IMR-90 (cell line): ENCODE measurements at regions of chr17 and their contacts with region 1.

Region 1: GRCh38 chr17:49574323-49574781 is 1.3 kb upstream of the NXPH3 start:
- DNase-seq: no peak
- ATAC-seq: no peak
- H3K4me3 ChIP-seq: no peak overlapping the region
- H3K27ac ChIP-seq: no peak overlapping the region
- H3K4me1 ChIP-seq: peaks cover 4% of the 10 kb centered on the region; the same call in 1 of the 2 replicates
- H3K27me3 ChIP-seq: peaks cover 65% of the 10 kb centered on the region
- CTCF ChIP-seq: no peak
- POLR2A ChIP-seq: no peak
- RAD21 ChIP-seq: no peak

Region 2: GRCh38 chr17:47941236-47941994 is 1632.9 kb before region 1 on chr17 and contains the start of gene PNPO:
- CTCF ChIA-PET with region 1: no interaction called
- POLR2A ChIA-PET with region 1: no interaction called
- dilution Hi-C with region 1: no loop called
- in situ Hi-C with region 1: no loop called
- intact Hi-C with region 1: no loop called
- DNase-seq: peak; percentile 97
- ATAC-seq: peak; percentile 100
- H3K4me3 ChIP-seq: peak within 1 kb of the TSS; percentile 70
- H3K27ac ChIP-seq: peak within 1 kb of the TSS; percentile 39; the same call in 1 of the 2 replicates
- H3K4me1 ChIP-seq: peaks cover 2% of the 10 kb centered on the region; the same call in 1 of the 2 replicates
- H3K27me3 ChIP-seq: no peaks in the 10 kb centered on the region
- CTCF ChIP-seq: no peak
- POLR2A ChIP-seq: no peak
- RAD21 ChIP-seq: no peak
- total RNA-seq, gene PNPO: 32.5 and 34.1 TPM in 2 replicates

Region 3: GRCh38 chr17:49180303-49180702 is 394.0 kb before region 1 on chr17:
- CTCF ChIA-PET with region 1: no interaction called
- POLR2A ChIA-PET with region 1: no interaction called
- dilution Hi-C with region 1: no loop called
- in situ Hi-C with region 1: no loop called
- intact Hi-C with region 1: no loop called
- DNase-seq: peak; percentile 36
- ATAC-seq: peak; percentile 85
- H3K4me3 ChIP-seq: no peak overlapping the region
- H3K27ac ChIP-seq: no peak overlapping the region
- H3K4me1 ChIP-seq: no peaks in the 10 kb centered on the region
- H3K27me3 ChIP-seq: peaks cover 2% of the 10 kb centered on the region
- CTCF ChIP-seq: peak; percentile 81
- POLR2A ChIP-seq: no peak
- RAD21 ChIP-seq: peak; percentile 75

Region 4: GRCh38 chr17:49249292-49249794 is 325.0 kb before region 1 on chr17:
- CTCF ChIA-PET with region 1: no interaction called
- POLR2A ChIA-PET with region 1: no interaction called
- dilution Hi-C with region 1: no loop called
- in situ Hi-C with region 1: no loop called
- intact Hi-C with region 1: no loop called
- DNase-seq: no peak
- ATAC-seq: peak; percentile 48
- H3K4me3 ChIP-seq: no peak overlapping the region
- H3K27ac ChIP-seq: no peak overlapping the region
- H3K4me1 ChIP-seq: no peaks in the 10 kb centered on the region
- H3K27me3 ChIP-seq: peaks cover 17% of the 10 kb centered on the region
- CTCF ChIP-seq: no peak
- POLR2A ChIP-seq: no peak
- RAD21 ChIP-seq: no peak

Region 5: DNA sequence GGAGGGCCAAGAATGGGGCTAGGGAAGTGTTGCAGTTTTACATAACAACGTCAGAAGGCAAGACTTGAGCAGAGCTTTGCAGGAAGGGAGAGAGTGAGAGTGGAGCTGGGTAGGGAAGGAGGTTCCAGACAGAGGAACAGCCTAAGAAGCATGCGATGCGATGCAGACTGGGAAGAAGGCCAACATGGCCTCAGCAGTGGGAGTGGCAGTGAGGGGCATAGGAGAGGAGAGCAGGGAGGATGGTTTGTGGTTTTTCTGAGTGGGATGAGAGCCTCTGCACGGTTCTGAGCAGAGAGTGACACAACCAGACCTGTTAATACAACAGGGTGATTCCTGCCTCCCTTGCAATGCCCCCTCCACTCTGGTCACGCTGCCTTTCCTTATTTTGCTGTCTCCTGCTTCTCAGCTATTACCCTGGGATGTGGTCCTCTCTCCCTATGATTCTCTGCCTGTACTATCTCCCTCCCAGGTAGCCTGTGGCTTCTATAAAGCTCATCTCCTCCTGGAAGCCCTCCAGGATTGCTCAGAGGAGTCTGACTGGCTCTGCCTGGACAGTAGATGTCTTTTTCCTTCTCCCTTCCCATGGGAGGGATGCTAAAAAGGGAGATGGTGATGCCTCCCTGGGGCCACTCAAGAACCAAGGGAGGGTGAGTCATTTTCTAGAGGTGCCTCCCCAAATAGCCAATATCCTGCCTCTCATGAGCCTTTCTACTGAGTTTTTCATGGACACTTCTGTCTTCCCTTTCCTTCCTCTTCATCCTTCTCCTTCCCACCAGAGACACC is 118.0 kb before region 1 on chr17:
- CTCF ChIA-PET with region 1: no interaction called
- POLR2A ChIA-PET with region 1: no interaction called
- dilution Hi-C with region 1: no loop called
- in situ Hi-C with region 1: no loop called
- intact Hi-C with region 1: no loop called
- DNase-seq: peak; percentile 89
- ATAC-seq: peak; percentile 98
- H3K4me3 ChIP-seq: no peak overlapping the region
- H3K27ac ChIP-seq: no peak overlapping the region
- H3K4me1 ChIP-seq: peaks cover 6% of the 10 kb centered on the region
- H3K27me3 ChIP-seq: peaks cover 41% of the 10 kb centered on the region
- CTCF ChIP-seq: no peak
- POLR2A ChIP-seq: no peak
- RAD21 ChIP-seq: no peak

Region 6: GRCh38 chr17:49667854-49668253 is 93.5 kb after region 1 on chr17:
- CTCF ChIA-PET with region 1: no interaction called
- POLR2A ChIA-PET with region 1: interaction called, 17 read pairs
- dilution Hi-C with region 1: no loop called
- in situ Hi-C with region 1: no loop called
- intact Hi-C with region 1: no loop called
- DNase-seq: no peak
- ATAC-seq: no peak
- H3K4me3 ChIP-seq: no peak overlapping the region
- H3K27ac ChIP-seq: no peak overlapping the region
- H3K4me1 ChIP-seq: no peaks in the 10 kb centered on the region
- H3K27me3 ChIP-seq: no peaks in the 10 kb centered on the region
- CTCF ChIP-seq: no peak
- POLR2A ChIP-seq: no peak
- RAD21 ChIP-seq: no peak

Region 7: GRCh38 chr17:49677933-49678847 is 103.8 kb after region 1 on chr17 and contains the start of gene SPOP:
- CTCF ChIA-PET with region 1: interaction called, 4 read pairs
- POLR2A ChIA-PET with region 1: no interaction called
- dilution Hi-C with region 1: no loop called
- in situ Hi-C with region 1: no loop called
- intact Hi-C with region 1: loop called (anchors 5 kb)
- DNase-seq: peak; percentile 100
- ATAC-seq: peak; percentile 99
- H3K4me3 ChIP-seq: peak within 1 kb of the TSS; percentile 69
- H3K27ac ChIP-seq: peak within 1 kb of the TSS; percentile 86
- H3K4me1 ChIP-seq: peaks cover 4% of the 10 kb centered on the region; the same call in 1 of the 2 replicates
- H3K27me3 ChIP-seq: peaks cover 7% of the 10 kb centered on the region
- CTCF ChIP-seq: no peak
- POLR2A ChIP-seq: peak; percentile 32; the same call in 1 of the 2 replicates
- RAD21 ChIP-seq: no peak
- total RNA-seq, gene SPOP: 47.5 and 56.9 TPM in 2 replicates

Region 8: DNA sequence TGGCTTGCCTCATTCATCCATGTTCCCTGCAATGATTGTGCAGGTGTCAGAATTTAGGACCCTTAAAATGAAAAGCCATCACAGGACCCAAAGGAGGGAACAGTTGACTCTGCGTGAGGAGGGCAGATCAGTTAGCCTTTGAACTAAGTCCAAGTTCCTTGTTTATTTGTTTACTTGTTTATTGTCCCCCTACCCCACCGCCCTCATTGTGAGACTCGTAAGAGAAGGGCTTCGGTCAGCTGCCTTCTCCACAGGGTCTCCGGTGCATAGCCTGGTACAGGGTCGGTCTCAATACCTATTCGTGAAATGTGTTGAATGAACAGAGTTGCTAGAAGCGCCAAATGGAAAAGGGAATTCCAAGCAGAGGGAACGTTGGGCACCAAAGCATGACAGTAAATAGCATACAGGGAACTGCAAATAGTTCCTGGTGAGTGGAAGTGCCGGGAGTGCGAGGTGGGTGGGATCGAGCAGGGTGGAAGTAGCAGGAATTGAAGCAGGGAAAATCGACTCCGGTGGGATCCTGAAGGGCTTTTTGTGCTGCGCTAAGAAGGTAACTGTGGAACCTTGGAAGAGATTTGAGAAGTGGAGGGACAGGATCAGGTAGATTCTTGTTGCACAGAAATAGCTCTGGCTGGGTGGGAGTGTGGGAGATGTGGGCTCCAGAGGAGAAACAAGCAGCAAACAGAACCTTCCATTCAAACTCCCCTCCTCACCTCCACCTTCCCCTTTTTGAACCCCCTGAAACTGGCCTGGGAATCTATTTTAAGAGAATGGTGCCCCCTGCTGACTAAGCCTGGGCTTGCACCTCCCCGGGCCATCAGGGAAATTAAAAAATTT is 120.7 kb after region 1 on chr17:
- CTCF ChIA-PET with region 1: interaction called, 16 read pairs
- POLR2A ChIA-PET with region 1: no interaction called
- dilution Hi-C with region 1: no loop called
- in situ Hi-C with region 1: loop called (anchors 5 kb)
- intact Hi-C with region 1: no loop called
- DNase-seq: no peak
- ATAC-seq: peak; percentile 79
- H3K4me3 ChIP-seq: no peak overlapping the region
- H3K27ac ChIP-seq: no peak overlapping the region
- H3K4me1 ChIP-seq: no peaks in the 10 kb centered on the region
- H3K27me3 ChIP-seq: peaks cover 4% of the 10 kb centered on the region
- CTCF ChIP-seq: peak; percentile 95
- POLR2A ChIP-seq: no peak
- RAD21 ChIP-seq: peak; percentile 93

Region 9: DNA sequence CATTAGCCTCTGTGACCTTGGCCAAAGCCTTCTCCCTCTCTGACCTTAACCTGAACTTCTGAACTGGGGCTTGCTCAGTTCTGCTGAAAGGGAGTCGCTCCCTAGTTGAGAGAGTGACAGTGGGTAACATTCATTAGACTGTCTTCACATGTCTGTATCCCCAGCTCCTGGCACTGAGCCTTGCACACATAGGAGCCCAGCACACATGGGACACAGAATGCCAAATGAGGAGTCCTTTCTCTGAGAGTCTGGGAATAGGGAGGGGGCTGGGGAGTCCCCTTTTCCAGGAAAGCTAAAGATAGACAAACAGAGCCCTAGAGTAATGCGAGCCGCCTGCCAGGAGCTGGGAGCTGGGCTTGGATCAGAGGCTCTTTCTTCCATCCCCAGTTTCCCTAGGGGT is 271.0 kb after region 1 on chr17:
- CTCF ChIA-PET with region 1: no interaction called
- POLR2A ChIA-PET with region 1: no interaction called
- dilution Hi-C with region 1: no loop called
- in situ Hi-C with region 1: loop called (anchors 5 kb)
- intact Hi-C with region 1: no loop called
- DNase-seq: no peak
- ATAC-seq: peak; percentile 36
- H3K4me3 ChIP-seq: no peak overlapping the region
- H3K27ac ChIP-seq: no peak overlapping the region
- H3K4me1 ChIP-seq: peaks cover 6% of the 10 kb centered on the region; the same call in 1 of the 2 replicates
- H3K27me3 ChIP-seq: no peaks in the 10 kb centered on the region; the same call in 1 of the 2 replicates
- CTCF ChIP-seq: no peak
- POLR2A ChIP-seq: no peak
- RAD21 ChIP-seq: no peak